Gastrocnemius medialis (tissue), 4 donors: ENCODE measurements at regions of chr16 and their contacts with region 1.

Region 1: DNA sequence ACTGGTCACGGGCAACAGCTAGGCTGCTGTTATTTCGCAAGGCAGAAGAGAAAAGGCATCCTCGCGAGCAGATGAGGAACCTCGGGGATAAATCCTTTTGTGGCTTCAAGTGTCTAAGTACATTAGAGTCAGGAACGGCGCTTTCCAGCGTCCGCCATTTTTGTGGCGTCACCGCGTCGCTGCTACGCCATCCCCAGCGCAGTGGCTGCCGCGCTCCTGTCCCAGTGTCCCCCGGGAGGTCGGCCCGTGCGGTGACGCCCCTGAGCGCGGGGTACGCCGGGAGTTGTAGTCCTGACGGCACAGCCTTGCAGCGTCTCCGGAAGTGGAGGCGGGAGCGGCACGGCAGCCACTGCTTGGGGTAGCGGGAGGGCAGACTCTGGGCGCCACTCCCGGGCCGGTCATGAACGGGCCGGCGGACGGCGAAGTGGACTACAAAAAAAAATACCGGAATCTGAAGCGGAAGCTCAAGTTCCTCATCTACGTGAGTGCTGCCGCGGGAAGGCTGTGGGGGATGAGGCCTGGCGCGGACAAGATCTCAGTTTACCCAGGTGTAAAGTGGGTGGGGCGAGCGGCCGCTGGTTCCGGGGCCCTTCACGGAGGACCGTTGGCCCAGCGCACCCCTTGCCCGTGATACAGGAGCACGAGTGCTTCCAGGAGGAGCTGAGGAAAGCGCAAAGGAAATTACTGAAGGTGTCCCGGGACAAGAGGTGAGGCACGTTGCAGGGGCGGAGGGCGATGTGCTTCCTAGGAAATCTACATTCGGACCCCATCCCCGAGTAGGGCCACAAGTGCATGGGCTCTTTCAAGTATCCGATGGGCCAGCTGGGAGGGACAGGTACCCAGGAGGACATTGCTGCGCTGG is at the start of gene INO80E:
- DNase-seq: peak; percentile 98
- ATAC-seq: peak; percentile 91 to 97
- H3K4me3 ChIP-seq: peak within 1 kb of the TSS; percentile 79 to 100 (median 90)
- H3K27ac ChIP-seq: peak within 1 kb of the TSS; percentile 95 to 100 (median 99)
- H3K4me1 ChIP-seq: peaks cover 17 to 21% of the 10 kb centered on the region in 2 donors
- H3K27me3 ChIP-seq: no peaks in the 10 kb centered on the region
- CTCF ChIP-seq: peak in 1 of 5 experiments; percentile 10
- POLR2A ChIP-seq: peak; percentile 64 to 71
- total RNA-seq, gene INO80E: 45.4 to 74.8 (median 55.5) TPM

Region 2: GRCh38 chr16:29653471-29653870 is 342.7 kb before region 1 on chr16:
- in situ Hi-C with region 1: no loop called
- intact Hi-C with region 1: no loop called
- DNase-seq: no peak
- ATAC-seq: no peak
- H3K4me3 ChIP-seq: no peak overlapping the region
- H3K27ac ChIP-seq: no peak overlapping the region
- H3K4me1 ChIP-seq: no peaks in the 10 kb centered on the region
- H3K27me3 ChIP-seq: no peaks in the 10 kb centered on the region
- CTCF ChIP-seq: no peak
- POLR2A ChIP-seq: no peak

Region 3: DNA sequence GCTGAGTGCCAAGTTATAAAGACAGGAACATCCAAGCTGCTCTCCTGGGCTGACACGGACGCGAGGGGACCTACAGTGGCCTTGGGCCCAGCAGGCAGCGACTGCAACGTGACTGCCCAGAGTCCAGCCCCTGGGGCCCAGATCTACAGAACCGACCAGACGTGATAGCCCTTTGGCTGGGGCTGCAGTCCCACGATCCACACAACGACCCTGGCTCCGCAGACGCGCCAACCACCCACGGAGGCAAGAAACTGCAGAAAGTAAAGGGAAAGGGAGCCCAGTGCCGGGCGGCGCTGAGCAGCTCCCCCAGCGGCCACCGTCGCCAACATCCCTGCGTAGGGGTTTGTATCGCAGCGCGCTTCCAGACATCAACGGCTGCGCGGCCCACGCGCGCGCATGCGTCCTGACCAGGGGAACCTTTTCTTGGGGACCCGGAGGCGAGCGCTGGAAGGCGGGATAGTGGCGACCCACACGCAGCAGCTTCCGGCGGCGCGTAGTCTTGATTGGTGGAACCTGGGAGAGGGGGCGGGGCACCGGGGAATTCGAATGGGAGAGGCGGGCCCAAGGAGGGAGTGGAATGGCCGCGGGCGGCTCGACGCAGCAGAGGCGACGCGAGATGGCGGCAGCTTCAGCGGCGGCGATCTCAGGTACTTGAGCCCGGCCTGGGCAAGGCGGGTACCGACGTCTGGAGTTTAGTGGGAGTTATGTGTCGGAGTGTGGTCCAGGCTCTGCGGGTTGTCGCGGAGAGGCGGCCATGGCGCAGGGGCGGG is 205.8 kb before region 1 on chr16 and contains the start of gene KIF22:
- in situ Hi-C with region 1: no loop called
- intact Hi-C with region 1: loop called (anchors 1 kb)
- DNase-seq: peak; percentile 99
- ATAC-seq: peak; percentile 96 to 98
- H3K4me3 ChIP-seq: peak within 1 kb of the TSS; percentile 91 to 95 (median 92)
- H3K27ac ChIP-seq: peak within 1 kb of the TSS; percentile 89 to 95 (median 93)
- H3K4me1 ChIP-seq: peaks cover 18 to 24% of the 10 kb centered on the region in 2 donors
- H3K27me3 ChIP-seq: no peaks in the 10 kb centered on the region
- CTCF ChIP-seq: peak; percentile 68 to 89 (median 79)
- POLR2A ChIP-seq: peak; percentile 51 to 60
- total RNA-seq, gene KIF22: 9.0 to 13.9 (median 12.8) TPM

Region 4: DNA sequence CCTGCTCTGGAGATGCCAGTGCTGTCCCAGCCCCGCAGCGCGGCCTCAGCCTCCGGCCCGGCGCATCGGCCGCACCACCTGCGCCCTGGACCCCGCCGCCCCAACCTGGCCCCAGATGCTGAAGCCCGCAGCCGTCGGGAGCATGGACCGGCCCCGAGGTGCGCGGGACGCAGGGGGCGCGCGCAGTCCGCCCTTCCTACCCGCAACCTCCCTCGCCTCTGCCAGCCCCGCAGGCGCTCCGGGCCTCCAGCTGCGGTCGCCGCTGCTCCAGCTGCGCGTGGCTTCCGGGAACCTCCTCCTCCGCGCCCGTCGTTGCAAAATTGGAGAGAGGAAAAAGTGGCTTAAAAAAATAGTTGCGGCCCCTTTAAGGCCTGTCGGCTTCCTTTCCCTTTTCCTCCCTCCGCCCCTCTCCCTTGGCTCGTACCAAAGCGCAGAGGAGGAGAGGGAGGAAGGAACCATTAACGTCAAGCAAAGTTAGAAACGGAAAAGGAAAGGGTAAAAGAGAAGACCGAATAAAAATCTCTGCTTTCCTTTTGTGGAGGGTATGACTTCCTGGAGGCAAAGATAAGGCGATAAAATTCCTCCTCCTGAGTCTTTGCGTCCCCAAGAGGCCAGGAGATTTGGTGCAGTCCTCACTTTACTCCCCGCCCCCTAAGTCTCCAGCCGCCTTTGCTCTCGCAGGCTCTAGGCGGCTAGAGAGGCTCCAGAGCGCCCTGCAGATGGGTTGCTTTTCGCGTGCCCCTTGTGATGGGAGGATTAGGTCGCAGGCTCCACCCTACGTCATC is 133.1 kb before region 1 on chr16 and contains the start of gene CDIPT:
- in situ Hi-C with region 1: no loop called
- intact Hi-C with region 1: loop called (anchors 1 kb)
- DNase-seq: peak; percentile 92 to 94
- ATAC-seq: peak; percentile 99
- H3K4me3 ChIP-seq: peak within 1 kb of the TSS; percentile 78 to 98 (median 80)
- H3K27ac ChIP-seq: peak within 1 kb of the TSS; percentile 87 to 96 (median 93)
- H3K4me1 ChIP-seq: peaks cover 18 to 20% of the 10 kb centered on the region in 2 donors
- H3K27me3 ChIP-seq: no peaks in the 10 kb centered on the region
- CTCF ChIP-seq: peak; percentile 32 to 64 (median 57)
- POLR2A ChIP-seq: peak; percentile 36 to 41
- total RNA-seq, gene CDIPT: 35.5 to 71.8 (median 55.7) TPM

Region 5: DNA sequence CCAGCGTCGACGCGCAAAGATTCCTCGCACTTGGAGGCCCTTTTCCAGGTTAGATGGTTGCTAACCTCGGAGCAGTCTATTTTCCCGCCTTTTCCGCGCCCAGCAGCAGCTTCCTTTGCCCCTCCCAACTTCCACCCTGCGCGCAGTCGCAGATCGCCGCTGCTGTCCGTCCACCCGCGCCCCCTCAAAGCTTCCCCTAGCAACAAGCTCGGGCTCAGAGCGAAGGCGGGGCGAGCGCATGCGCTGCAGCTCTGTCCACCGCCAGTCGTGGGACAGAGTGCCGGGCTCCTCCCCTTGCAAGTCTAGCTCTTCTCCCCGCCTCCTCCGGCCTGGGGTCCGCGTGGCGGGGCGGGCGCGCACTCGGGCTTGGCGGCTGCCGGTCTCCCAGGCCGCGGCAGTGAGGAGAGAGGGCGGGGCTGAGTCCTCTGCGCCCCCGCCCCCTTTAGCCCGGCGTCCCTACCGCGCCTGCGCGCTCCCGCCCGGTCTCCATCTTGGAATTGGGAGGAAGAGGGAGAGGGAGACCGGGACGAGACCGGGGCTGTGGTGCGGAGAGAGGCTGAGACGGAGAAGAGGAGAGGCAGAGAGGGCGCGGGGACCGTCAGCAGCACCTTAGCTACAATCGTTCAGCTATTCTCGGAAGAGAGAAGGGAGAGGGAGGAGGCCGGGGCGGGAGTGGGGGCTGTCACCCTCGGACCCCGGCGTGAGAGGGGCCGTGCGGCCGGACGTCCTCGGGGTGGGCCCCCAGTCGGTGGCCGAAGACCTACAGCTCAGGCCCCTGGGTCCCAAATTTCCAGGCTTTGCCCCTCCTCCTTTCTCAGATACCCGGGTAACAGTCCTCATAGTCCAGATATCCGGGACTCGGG is 22.5 kb before region 1 on chr16 and contains the start of gene TAOK2:
- in situ Hi-C with region 1: no loop called
- intact Hi-C with region 1: loop called (anchors 1 kb)
- DNase-seq: peak; percentile 97 to 99
- ATAC-seq: peak; percentile 91 to 94
- H3K4me3 ChIP-seq: peak within 1 kb of the TSS; percentile 90 to 99 (median 94)
- H3K27ac ChIP-seq: peak within 1 kb of the TSS; percentile 94 to 100 (median 98)
- H3K4me1 ChIP-seq: peaks cover 26 to 28% of the 10 kb centered on the region in 2 donors
- H3K27me3 ChIP-seq: no peaks in the 10 kb centered on the region
- CTCF ChIP-seq: no peak
- POLR2A ChIP-seq: peak; percentile 83 to 86
- total RNA-seq, gene TAOK2: 15.9 to 31.0 (median 22.1) TPM

Region 6: DNA sequence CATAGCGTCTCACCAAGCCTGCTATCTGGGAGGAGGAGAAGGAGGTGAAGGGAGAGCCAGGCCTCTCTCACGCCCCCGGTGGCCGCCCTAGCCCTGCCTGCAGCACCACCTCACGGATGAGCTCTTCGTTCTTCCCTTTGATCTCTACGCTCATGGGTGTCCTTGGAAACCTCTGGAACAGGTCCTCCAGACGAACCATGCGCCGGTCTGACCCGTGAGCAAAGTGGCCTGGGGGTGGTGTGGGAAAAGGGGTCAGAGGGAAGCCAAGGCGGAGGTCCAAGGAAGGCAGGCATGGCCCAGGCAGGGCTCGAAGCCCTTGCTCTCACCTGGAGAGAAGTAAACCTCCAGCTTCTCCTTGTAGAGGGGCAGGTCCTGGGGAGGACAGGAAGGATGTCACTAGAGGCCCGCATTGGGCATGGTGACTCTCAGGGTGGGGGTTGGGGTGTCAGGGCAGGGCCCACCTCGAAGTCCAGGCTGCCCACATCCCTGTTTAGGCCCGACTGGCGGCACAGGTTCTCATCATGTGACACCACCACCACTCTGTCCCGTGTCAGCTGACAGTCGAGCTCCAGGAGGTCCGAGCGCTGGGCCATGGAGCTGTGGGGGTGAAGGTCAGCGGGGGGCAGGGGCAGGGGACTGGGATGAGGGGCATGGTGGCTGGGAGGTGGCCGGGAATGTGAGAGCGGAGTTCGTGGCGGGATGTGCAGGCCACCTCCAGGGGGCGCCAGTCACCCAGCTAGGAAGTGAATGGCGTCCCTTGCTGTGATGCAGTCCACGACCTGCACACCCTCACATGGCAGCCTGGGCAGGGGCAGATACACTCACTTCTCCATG is 116.3 kb after region 1 on chr16:
- in situ Hi-C with region 1: no loop called
- intact Hi-C with region 1: no loop called
- DNase-seq: peak in 1 of 2 donors; percentile 32
- ATAC-seq: no peak
- H3K4me3 ChIP-seq: no peak overlapping the region
- H3K27ac ChIP-seq: no peak overlapping the region
- H3K4me1 ChIP-seq: no peaks in the 10 kb centered on the region
- H3K27me3 ChIP-seq: no peaks in the 10 kb centered on the region
- CTCF ChIP-seq: peak in 4 of 5 experiments; percentile 53 to 62 (median 58)
- POLR2A ChIP-seq: no peak

Region 7: DNA sequence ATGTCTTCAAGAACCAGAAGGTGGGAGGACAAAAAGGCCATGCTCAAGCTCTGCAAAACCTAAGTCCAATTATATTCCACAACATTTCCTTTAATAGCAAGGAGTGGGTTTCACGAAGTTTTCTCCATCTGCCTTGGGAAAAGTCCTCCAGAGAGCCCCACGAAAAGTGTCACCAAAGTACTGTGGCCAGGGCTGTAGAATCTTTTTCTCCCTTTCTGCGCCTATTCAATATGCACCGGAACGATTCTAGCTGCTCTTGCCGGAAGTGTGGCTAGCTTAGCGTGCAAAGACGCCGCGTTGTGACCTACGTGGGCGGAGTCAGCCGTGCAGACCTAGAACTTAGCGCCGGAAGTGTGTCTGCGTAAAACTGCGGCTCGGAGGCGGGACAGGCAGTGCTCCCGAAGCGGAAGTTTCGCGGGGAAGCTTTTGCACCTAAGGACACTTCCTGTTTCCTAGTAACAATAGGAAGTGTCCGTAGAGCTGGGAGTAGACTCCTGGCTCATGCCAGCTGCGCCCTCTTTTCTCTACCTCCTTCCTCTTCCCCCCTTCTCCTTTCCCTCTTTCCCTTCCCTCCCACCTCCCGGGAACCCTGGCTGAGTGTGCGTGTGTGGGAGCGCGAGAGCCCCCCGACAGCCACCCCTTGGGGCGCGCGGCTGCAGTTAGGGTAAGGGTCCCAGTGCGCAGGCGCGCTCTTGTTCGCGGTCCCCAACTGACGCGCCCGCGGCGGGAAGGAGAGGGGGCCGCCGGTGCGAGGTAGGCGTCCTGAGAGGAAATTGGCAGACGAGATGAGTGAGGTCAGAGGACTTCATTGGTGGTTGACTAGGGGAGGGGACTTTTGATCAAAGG is 1078.0 kb after region 1 on chr16 and contains the starts of genes ZNF646 and ZNF668:
- in situ Hi-C with region 1: no loop called
- intact Hi-C with region 1: loop called (anchors 5 kb)
- DNase-seq: peak; percentile 98
- ATAC-seq: peak; percentile 88 to 94
- H3K4me3 ChIP-seq: peak within 1 kb of the TSS; percentile 95 to 100 (median 96)
- H3K27ac ChIP-seq: peak within 1 kb of the TSS; percentile 97 to 99 (median 99)
- H3K4me1 ChIP-seq: peaks cover 24 to 30% of the 10 kb centered on the region in 2 donors
- H3K27me3 ChIP-seq: no peaks in the 10 kb centered on the region
- CTCF ChIP-seq: no peak
- POLR2A ChIP-seq: peak; percentile 78 to 93
- total RNA-seq, gene ZNF646: 11.7 to 33.2 (median 21.5) TPM
- total RNA-seq, gene ZNF668: 6.6 to 16.0 (median 11.0) TPM